RWPE1 (cell line): ENCODE measurements at regions of chr12 and their contacts with region 1.

Region 1: GRCh38 chr12:65823513-65824375 is 539 bp upstream of the HMGA2 start:
- DNase-seq: peak; percentile 69
- H3K27ac ChIP-seq: peak overlapping the region; percentile 99
- CTCF ChIP-seq: no peak

Region 2: GRCh38 chr12:65681226-65681625 is 142.5 kb before region 1 on chr12:
- CTCF ChIA-PET with region 1: no interaction called
- POLR2A ChIA-PET with region 1: no interaction called
- DNase-seq: no peak
- H3K27ac ChIP-seq: no peak overlapping the region
- CTCF ChIP-seq: no peak

Region 3: GRCh38 chr12:66044731-66045130 is 221.0 kb after region 1 on chr12:
- CTCF ChIA-PET with region 1: no interaction called
- POLR2A ChIA-PET with region 1: no interaction called
- DNase-seq: peak; percentile 20
- H3K27ac ChIP-seq: no peak overlapping the region; the same call in 1 of the 2 replicates
- CTCF ChIP-seq: no peak

Region 4: DNA sequence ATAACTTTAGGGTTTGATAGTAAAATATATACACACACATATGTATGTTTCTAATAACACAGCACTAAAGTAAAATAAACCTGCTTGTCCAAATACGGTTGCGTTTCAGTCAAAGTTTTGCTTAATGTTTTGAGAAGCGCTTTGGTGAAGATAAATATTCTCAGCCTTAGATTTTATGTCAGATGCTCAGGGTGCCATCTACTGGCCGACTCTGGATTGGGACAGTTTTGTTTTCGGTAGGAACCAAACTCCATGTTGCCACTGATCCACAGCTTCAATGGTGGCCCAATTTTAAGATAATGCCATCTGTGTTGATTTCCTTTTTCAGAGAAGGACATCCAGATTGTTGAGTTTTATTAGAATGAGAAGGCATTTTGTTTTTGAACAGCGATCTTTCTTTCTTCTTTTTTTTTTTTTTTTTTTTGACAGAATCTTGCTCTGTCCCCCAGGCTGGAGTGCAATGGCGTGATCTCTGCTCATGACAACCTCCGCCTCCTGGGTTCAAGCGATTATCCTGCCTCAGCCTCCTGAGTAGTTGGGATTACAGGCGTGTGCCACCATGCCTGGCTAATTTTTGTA is 263.7 kb after region 1 on chr12:
- CTCF ChIA-PET with region 1: interaction called, 3 read pairs
- POLR2A ChIA-PET with region 1: interaction called, 10 read pairs
- DNase-seq: peak; percentile 55
- H3K27ac ChIP-seq: no peak overlapping the region
- CTCF ChIP-seq: peak; percentile 89